ENCODE measurements at regions of chr15 and their contacts with region 1.

Region 1: DNA sequence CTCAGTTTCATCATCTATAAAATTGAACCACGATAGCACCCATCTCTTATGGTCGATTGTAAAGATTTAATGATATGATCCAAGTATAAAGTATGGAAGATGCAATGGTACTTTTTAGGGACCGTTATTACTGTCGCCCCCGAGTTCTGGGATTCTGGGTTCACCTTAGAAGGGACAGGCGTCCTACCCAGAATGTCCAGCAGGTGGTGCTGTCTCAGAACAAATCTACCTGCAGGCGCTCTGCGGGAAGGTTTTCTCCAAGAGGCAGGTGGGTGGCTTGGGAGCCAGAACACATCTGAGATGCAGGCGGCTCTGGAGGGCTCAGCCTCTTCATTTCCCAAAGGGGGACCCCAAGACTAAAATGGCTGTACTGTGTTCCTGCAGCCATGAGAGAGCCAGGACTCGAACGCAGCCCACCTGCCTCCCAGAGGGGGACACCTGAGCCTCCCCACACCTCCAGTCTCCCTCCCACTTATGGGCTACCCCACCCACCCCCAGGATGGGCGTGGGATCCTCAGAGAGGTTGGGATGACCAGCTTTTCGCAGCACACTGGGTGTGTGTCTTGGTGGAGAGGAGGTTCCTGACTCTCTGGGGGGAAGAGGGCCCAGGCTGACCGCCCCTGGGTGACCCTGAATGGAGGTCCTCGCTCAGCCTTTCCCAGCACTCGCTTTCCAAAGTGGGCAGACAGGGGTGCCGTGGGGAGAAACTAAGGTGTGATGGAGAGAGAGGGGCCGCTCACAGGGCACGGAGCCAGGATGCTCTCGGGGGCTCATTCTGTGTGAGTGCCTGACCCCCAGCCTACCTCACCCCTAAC is 28.1 kb upstream of the CORO2B start:
- DNase-seq: peak; percentile 46 to 83 (median 67)
- ATAC-seq: no peak
- H3K4me3 ChIP-seq: no peak overlapping the region
- H3K4me3 Mint-ChIP-seq: no peak overlapping the region
- H3K27ac ChIP-seq: no peak overlapping the region
- H3K27ac Mint-ChIP-seq: no peak overlapping the region
- H3K4me1 ChIP-seq: no peaks in the 10 kb centered on the region
- H3K4me1 Mint-ChIP-seq: no peaks in the 10 kb centered on the region
- H3K27me3 ChIP-seq: peaks cover 2 to 5% of the 10 kb centered on the region in 2 experiments
- H3K27me3 Mint-ChIP-seq: peaks cover 42% of the 10 kb centered on the region
- CTCF ChIP-seq: peak; percentile 89

Region 2: GRCh38 chr15:68252925-68253534 is 297.7 kb before region 1 on chr15:
- CTCF ChIA-PET with region 1: no interaction called
- POLR2A ChIA-PET with region 1: no interaction called
- intact Hi-C with region 1: loop called in 1 of 2 experiments (anchors 5 kb)
- DNase-seq: peak in 6 of 9 experiments; percentile 9 to 74 (median 38)
- ATAC-seq: peak; percentile 80
- H3K4me3 ChIP-seq: no peak overlapping the region
- H3K4me3 Mint-ChIP-seq: no peak overlapping the region
- H3K27ac ChIP-seq: no peak overlapping the region
- H3K27ac Mint-ChIP-seq: no peak overlapping the region
- H3K4me1 ChIP-seq: no peaks in the 10 kb centered on the region
- H3K4me1 Mint-ChIP-seq: peaks cover 8% of the 10 kb centered on the region
- H3K27me3 ChIP-seq: peaks cover 0 to 2% of the 10 kb centered on the region in 2 experiments
- H3K27me3 Mint-ChIP-seq: peaks cover 6% of the 10 kb centered on the region
- CTCF ChIP-seq: peak; percentile 95

Region 3: DNA sequence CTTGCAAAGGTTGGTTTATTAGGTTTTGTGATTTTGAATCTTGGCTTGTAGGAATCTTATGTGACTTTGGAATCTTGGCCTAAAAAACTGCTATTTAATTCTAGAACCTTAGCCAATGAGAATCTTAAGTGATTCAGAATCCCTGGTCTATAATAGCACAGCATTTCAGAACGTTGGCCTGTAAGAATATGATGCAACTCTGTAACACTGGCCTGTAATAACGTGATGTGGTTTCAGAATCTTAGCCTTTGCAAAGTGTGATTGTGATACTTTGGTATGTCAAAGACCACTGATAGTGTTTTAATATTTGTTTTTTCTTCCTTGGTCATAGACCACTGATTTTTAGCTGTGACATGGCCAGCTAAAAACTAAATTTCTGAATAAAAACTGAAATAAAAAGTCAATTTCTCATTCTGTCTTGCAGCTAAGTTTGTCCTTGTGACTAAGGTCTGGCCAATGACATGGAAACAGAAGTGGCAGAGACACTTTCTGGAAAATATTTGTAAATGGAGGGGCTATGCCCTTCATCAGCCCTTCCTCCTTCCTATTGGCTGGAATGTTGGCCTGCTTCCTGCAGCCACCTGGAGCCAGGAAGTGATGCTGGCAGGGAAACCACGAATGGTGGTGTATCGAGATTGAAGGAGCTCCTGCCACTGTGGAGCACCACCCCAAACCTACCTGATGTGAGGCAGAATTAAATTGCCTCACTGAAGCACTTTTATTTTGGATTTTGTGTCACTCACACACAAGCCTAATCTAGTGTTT is 14.2 kb before region 1 on chr15:
- CTCF ChIA-PET with region 1: interaction called, 18 read pairs
- POLR2A ChIA-PET with region 1: no interaction called
- intact Hi-C with region 1: no loop called
- DNase-seq: no peak
- ATAC-seq: no peak
- H3K4me3 ChIP-seq: no peak overlapping the region
- H3K4me3 Mint-ChIP-seq: no peak overlapping the region
- H3K27ac ChIP-seq: no peak overlapping the region
- H3K27ac Mint-ChIP-seq: no peak overlapping the region
- H3K4me1 ChIP-seq: no peaks in the 10 kb centered on the region
- H3K4me1 Mint-ChIP-seq: no peaks in the 10 kb centered on the region
- H3K27me3 ChIP-seq: peaks cover 2 to 4% of the 10 kb centered on the region in 2 experiments
- H3K27me3 Mint-ChIP-seq: peaks cover 21% of the 10 kb centered on the region
- CTCF ChIP-seq: no peak

Region 4: GRCh38 chr15:68570974-68571373 is 20.3 kb after region 1 on chr15:
- CTCF ChIA-PET with region 1: interaction called, 13 read pairs
- POLR2A ChIA-PET with region 1: no interaction called
- intact Hi-C with region 1: no loop called
- DNase-seq: no peak
- ATAC-seq: no peak
- H3K4me3 ChIP-seq: no peak overlapping the region
- H3K4me3 Mint-ChIP-seq: no peak overlapping the region
- H3K27ac ChIP-seq: no peak overlapping the region
- H3K27ac Mint-ChIP-seq: no peak overlapping the region
- H3K4me1 ChIP-seq: no peaks in the 10 kb centered on the region
- H3K4me1 Mint-ChIP-seq: no peaks in the 10 kb centered on the region
- H3K27me3 ChIP-seq: peaks cover 0 to 2% of the 10 kb centered on the region in 2 experiments
- H3K27me3 Mint-ChIP-seq: peaks cover 57% of the 10 kb centered on the region
- CTCF ChIP-seq: no peak

Region 5: DNA sequence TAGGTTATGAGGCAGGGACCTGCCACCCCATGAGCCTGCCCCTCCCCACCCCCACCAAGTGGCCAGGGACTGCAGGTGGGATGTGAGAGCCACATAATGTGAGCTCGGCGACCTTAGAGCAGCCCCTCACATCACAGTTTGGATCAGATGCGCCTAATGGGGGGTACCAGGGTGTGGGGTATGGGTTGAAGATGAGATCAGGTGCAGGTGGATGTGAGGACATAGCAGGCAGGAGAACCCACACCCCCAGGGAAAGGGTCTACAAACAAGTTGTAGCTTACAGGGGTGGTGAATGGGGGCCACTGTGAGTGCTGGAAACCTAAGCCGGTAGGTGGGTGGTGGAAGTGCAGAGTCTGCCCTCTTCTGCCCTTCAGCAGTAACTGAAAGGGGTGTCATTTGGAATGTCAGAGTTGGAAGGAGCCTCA is 122.1 kb after region 1 on chr15:
- CTCF ChIA-PET with region 1: interaction called, 12 read pairs
- POLR2A ChIA-PET with region 1: no interaction called
- intact Hi-C with region 1: loop called (anchors 1 to 5 kb)
- DNase-seq: no peak
- ATAC-seq: no peak
- H3K4me3 ChIP-seq: no peak overlapping the region
- H3K4me3 Mint-ChIP-seq: no peak overlapping the region
- H3K27ac ChIP-seq: no peak overlapping the region
- H3K27ac Mint-ChIP-seq: no peak overlapping the region
- H3K4me1 ChIP-seq: no peaks in the 10 kb centered on the region
- H3K4me1 Mint-ChIP-seq: peaks cover 4% of the 10 kb centered on the region
- H3K27me3 ChIP-seq: no peaks in the 10 kb centered on the region
- H3K27me3 Mint-ChIP-seq: peaks cover 10% of the 10 kb centered on the region
- CTCF ChIP-seq: no peak

Region 6: DNA sequence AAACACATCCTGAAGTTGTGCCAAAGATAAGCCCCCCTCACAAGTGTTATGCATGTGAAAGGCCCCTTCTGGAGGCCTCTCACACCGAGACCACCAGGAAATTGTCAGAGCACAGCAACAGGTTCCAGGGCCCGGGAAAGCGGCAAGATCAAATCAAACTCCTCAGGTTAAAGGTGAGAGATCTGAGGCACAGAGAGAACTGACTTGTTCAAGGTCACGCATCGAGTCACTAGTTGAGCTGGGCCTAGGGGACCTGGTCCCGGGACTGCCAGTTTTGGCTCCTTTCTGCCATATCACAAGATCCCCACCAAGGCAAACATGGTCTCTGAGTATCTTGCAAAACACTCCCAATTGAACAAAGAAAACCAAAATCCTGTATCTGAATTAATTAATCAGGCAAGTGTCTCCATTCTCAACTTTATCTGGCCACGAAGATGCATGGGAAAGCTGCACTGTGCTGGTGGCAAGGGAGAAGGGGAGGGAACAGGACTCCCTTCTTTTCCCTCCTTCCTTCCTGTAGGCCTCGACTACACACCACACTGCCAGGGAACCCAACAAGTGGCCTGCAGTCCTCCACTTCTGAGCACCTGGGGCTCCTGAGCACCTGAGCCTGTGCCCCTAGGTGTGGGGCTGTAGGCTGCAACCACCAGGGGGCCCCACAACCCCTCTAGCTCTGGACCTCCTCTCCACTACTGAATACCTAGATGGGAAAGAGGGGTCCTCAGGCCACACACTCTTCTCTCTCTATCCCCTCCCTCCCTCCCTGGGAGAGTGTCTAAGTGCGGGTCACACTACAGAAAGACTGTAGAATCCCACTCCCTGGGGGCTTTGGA is 232.8 kb after region 1 on chr15:
- CTCF ChIA-PET with region 1: interaction called, 3 read pairs
- POLR2A ChIA-PET with region 1: no interaction called
- intact Hi-C with region 1: loop called in 1 of 2 experiments (anchors 1 kb)
- DNase-seq: peak; percentile 39 to 79 (median 72)
- ATAC-seq: peak; percentile 90
- H3K4me3 ChIP-seq: no peak overlapping the region
- H3K4me3 Mint-ChIP-seq: no peak overlapping the region
- H3K27ac ChIP-seq: no peak overlapping the region
- H3K27ac Mint-ChIP-seq: peak overlapping the region; percentile 93
- H3K4me1 ChIP-seq: peaks cover 23% of the 10 kb centered on the region
- H3K4me1 Mint-ChIP-seq: peaks cover 34% of the 10 kb centered on the region
- H3K27me3 ChIP-seq: no peaks in the 10 kb centered on the region
- H3K27me3 Mint-ChIP-seq: no peaks in the 10 kb centered on the region
- CTCF ChIP-seq: peak; percentile 77

Region 7: GRCh38 chr15:68924866-68925560 is 374.3 kb after region 1 on chr15:
- CTCF ChIA-PET with region 1: interaction called, 12 read pairs
- POLR2A ChIA-PET with region 1: no interaction called
- intact Hi-C with region 1: loop called in 1 of 2 experiments (anchors 1 kb)
- DNase-seq: peak; percentile 16 to 64 (median 56)
- ATAC-seq: no peak
- H3K4me3 ChIP-seq: no peak overlapping the region
- H3K4me3 Mint-ChIP-seq: no peak overlapping the region
- H3K27ac ChIP-seq: no peak overlapping the region
- H3K27ac Mint-ChIP-seq: no peak overlapping the region
- H3K4me1 ChIP-seq: no peaks in the 10 kb centered on the region
- H3K4me1 Mint-ChIP-seq: no peaks in the 10 kb centered on the region
- H3K27me3 ChIP-seq: no peaks in the 10 kb centered on the region
- H3K27me3 Mint-ChIP-seq: peaks cover 15% of the 10 kb centered on the region
- CTCF ChIP-seq: peak; percentile 62

Measured in CD8-positive, alpha-beta T cell (primary cell).